ENCODE measurements at regions of chr19 and their contacts with region 1.

Region 1: GRCh38 chr19:2391118-2391725 is 31.2 kb downstream of the TMPRSS9 start:
- DNase-seq: peak; percentile 21
- ATAC-seq: peak; percentile 50
- H3K4me3 ChIP-seq: no peak overlapping the region
- H3K27ac ChIP-seq: no peak overlapping the region
- H3K4me1 ChIP-seq: peaks cover 9% of the 10 kb centered on the region
- H3K27me3 ChIP-seq: no peaks in the 10 kb centered on the region; a peak in 1 of 4 replicates
- CTCF ChIP-seq: peak; percentile 73 to 82 (median 77)
- EP300 ChIP-seq: no peak
- POLR2A ChIP-seq: no peak
- RAD21 ChIP-seq: peak; percentile 91

Region 2: GRCh38 chr19:2151339-2152229 is 239.6 kb before region 1 on chr19 and contains the start of gene AP3D1:
- CTCF ChIA-PET with region 1: interaction called, 25 read pairs
- POLR2A ChIA-PET with region 1: no interaction called
- RAD21 ChIA-PET with region 1: interaction called, 29 read pairs
- SMC1A ChIA-PET with region 1: interaction called, 5 read pairs
- in situ Hi-C with region 1: no loop called
- intact Hi-C with region 1: loop called (anchors 5 kb)
- DNase-seq: peak; percentile 98
- ATAC-seq: peak; percentile 89
- H3K4me3 ChIP-seq: peak within 1 kb of the TSS; percentile 96
- H3K27ac ChIP-seq: peak within 1 kb of the TSS; percentile 91
- H3K4me1 ChIP-seq: peaks cover 20% of the 10 kb centered on the region
- H3K27me3 ChIP-seq: no peaks in the 10 kb centered on the region
- CTCF ChIP-seq: no peak
- EP300 ChIP-seq: no peak
- POLR2A ChIP-seq: peak; percentile 82
- RAD21 ChIP-seq: no peak
- polyA plus RNA-seq, gene AP3D1: 1.5 to 3.0 TPM

Region 3: GRCh38 chr19:2168619-2169424 is 222.4 kb before region 1 on chr19:
- CTCF ChIA-PET with region 1: no interaction called
- POLR2A ChIA-PET with region 1: interaction called, 7 read pairs
- RAD21 ChIA-PET with region 1: interaction called, 16 read pairs
- SMC1A ChIA-PET with region 1: interaction called, 4 read pairs
- in situ Hi-C with region 1: no loop called
- intact Hi-C with region 1: no loop called
- DNase-seq: peak; percentile 92
- ATAC-seq: peak; percentile 70
- H3K4me3 ChIP-seq: peak overlapping the region; percentile 92; the same call in 1 of the 2 replicates
- H3K27ac ChIP-seq: peak overlapping the region; percentile 74
- H3K4me1 ChIP-seq: peaks cover 49% of the 10 kb centered on the region
- H3K27me3 ChIP-seq: no peaks in the 10 kb centered on the region
- CTCF ChIP-seq: 0 out of 6 replicates have a peak, but pooled peaks of 1 of the 3 experiments have one; percentile 14
- EP300 ChIP-seq: peak; percentile 52 to 75; a peak in 2 of 4 replicates
- POLR2A ChIP-seq: peak; percentile 59; the same call in 1 of the 2 replicates
- RAD21 ChIP-seq: no peak

Region 4: GRCh38 chr19:2246801-2247361 is 144.3 kb before region 1 on chr19:
- CTCF ChIA-PET with region 1: no interaction called
- POLR2A ChIA-PET with region 1: no interaction called
- RAD21 ChIA-PET with region 1: no interaction called
- SMC1A ChIA-PET with region 1: no interaction called
- in situ Hi-C with region 1: no loop called
- intact Hi-C with region 1: no loop called
- DNase-seq: no peak
- ATAC-seq: no peak
- H3K4me3 ChIP-seq: no peak overlapping the region
- H3K27ac ChIP-seq: no peak overlapping the region
- H3K4me1 ChIP-seq: no peaks in the 10 kb centered on the region
- H3K27me3 ChIP-seq: peaks cover 0 to 3% of the 10 kb centered on the region in 2 experiments; a peak in 2 of 4 replicates
- CTCF ChIP-seq: no peak
- EP300 ChIP-seq: no peak
- POLR2A ChIP-seq: peak; percentile 56
- RAD21 ChIP-seq: no peak

Region 5: GRCh38 chr19:2269244-2269947 is 121.8 kb before region 1 on chr19:
- CTCF ChIA-PET with region 1: interaction called, 40 read pairs
- POLR2A ChIA-PET with region 1: interaction called, 4 read pairs
- RAD21 ChIA-PET with region 1: interaction called, 4 read pairs
- SMC1A ChIA-PET with region 1: interaction called, 10 read pairs
- in situ Hi-C with region 1: no loop called
- intact Hi-C with region 1: no loop called
- DNase-seq: peak; percentile 66
- ATAC-seq: peak; percentile 61
- H3K4me3 ChIP-seq: peak overlapping the region; percentile 95
- H3K27ac ChIP-seq: peak overlapping the region; percentile 89
- H3K4me1 ChIP-seq: peaks cover 20% of the 10 kb centered on the region
- H3K27me3 ChIP-seq: no peaks in the 10 kb centered on the region
- CTCF ChIP-seq: peak; percentile 5 to 9 (median 9); a peak in 1 of 6 replicates
- EP300 ChIP-seq: no peak
- POLR2A ChIP-seq: peak; percentile 100
- RAD21 ChIP-seq: no peak

Region 6: DNA sequence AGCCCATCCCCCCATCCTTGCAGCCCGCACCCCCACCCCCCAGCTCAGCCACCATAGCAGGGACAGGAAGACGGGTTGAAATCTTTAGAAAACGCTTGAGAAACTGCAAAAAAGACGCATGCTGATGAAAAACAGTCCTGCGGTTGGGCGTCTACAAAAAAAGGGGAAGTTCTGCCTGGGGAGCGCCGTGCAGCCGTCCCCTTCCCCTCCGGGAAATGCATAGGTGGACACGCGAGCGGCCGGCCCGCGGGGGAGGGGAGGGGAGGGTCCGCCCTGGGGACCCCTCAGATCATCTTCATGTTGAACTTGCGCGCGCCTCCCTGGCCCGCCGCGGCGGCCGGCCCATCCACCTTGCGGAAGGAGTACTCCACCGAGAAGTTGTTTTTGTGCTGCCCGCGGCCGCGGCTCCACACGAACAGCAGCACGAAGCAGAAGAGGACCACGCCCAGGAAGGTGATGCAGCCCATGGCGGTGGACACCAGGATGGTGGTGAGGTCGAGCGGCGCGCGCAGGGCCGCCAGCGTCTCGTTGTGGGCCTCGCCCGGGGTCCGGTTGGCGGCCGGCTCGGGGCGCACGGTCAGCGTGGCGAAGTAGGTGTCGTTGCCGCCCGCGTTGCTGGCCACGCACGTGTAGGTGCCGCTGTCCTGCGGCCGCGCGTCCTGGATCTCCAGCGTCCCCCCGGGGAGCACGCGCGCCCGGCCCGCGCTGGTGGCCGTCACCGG is 101.3 kb before region 1 on chr19:
- CTCF ChIA-PET with region 1: interaction called, 9 read pairs
- POLR2A ChIA-PET with region 1: no interaction called
- RAD21 ChIA-PET with region 1: interaction called, 6 read pairs
- SMC1A ChIA-PET with region 1: interaction called, 10 read pairs
- in situ Hi-C with region 1: no loop called
- intact Hi-C with region 1: no loop called
- DNase-seq: peak; percentile 48
- ATAC-seq: peak; percentile 72
- H3K4me3 ChIP-seq: peak overlapping the region; percentile 65
- H3K27ac ChIP-seq: peak overlapping the region; percentile 74
- H3K4me1 ChIP-seq: peaks cover 30% of the 10 kb centered on the region
- H3K27me3 ChIP-seq: no peaks in the 10 kb centered on the region
- CTCF ChIP-seq: no peak
- EP300 ChIP-seq: peak; percentile 53 to 55; a peak in 2 of 4 replicates
- POLR2A ChIP-seq: no peak; the same call in 1 of the 2 replicates
- RAD21 ChIP-seq: no peak

Region 7: DNA sequence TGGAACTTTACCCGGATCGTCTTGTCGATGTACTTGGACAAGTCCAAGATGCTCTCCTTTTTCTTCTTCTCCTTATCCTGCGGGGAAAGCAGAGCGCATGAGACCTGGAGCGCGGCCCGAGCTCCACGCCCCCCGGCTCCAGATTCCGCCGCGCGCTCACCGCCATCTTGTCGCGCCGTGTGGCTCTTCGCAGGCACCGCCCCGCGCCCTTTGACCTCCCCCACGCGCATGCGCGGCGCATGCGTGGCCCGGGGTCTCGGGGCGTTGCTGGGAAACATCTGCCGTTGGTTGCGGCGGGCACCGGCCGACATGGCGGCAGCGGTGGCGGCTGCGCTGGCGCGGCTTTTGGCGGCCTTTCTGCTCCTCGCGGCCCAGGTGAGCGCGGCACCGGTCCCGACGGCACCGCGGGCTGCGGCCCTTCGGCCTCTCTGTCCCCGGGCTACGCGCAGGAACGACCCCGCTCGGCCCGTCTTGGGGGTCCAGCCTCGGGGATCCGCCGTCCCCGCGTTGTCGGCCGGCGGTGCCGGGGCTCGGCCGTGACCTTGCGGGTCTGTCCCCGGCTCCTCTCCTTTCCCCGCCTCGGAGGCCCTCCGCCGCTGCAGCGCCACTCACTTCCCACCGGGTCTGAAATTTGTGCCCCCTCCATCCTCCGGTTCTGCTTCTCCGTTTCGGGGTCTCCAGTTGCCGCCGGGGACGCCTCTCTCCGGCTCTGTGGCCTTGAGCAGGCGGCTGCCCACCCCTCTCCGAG is 62.6 kb before region 1 on chr19 and contains the starts of genes LSM7 and SPPL2B:
- CTCF ChIA-PET with region 1: interaction called, 5 read pairs
- POLR2A ChIA-PET with region 1: interaction called, 6 read pairs
- RAD21 ChIA-PET with region 1: interaction called, 9 read pairs
- SMC1A ChIA-PET with region 1: interaction called, 7 read pairs
- in situ Hi-C with region 1: no loop called
- intact Hi-C with region 1: loop called (anchors 5 kb)
- DNase-seq: peak; percentile 64
- ATAC-seq: peak; percentile 66
- H3K4me3 ChIP-seq: peak within 1 kb of the TSS; percentile 90
- H3K27ac ChIP-seq: peak within 1 kb of the TSS; percentile 76
- H3K4me1 ChIP-seq: peaks cover 35% of the 10 kb centered on the region
- H3K27me3 ChIP-seq: no peaks in the 10 kb centered on the region
- CTCF ChIP-seq: no peak
- EP300 ChIP-seq: no peak
- POLR2A ChIP-seq: peak; percentile 90
- RAD21 ChIP-seq: no peak
- polyA plus RNA-seq, gene LSM7: 24.4 to 108 TPM
- polyA plus RNA-seq, gene SPPL2B: 0.29 to 0.40 TPM

Region 8: GRCh38 chr19:2443066-2443787 is 52.0 kb after region 1 on chr19:
- CTCF ChIA-PET with region 1: no interaction called
- POLR2A ChIA-PET with region 1: no interaction called
- RAD21 ChIA-PET with region 1: no interaction called
- SMC1A ChIA-PET with region 1: no interaction called
- in situ Hi-C with region 1: no loop called
- intact Hi-C with region 1: no loop called
- DNase-seq: no peak
- ATAC-seq: no peak
- H3K4me3 ChIP-seq: no peak overlapping the region
- H3K27ac ChIP-seq: no peak overlapping the region
- H3K4me1 ChIP-seq: peaks cover 11% of the 10 kb centered on the region; the same call in 1 of the 2 replicates
- H3K27me3 ChIP-seq: no peaks in the 10 kb centered on the region
- CTCF ChIP-seq: no peak
- EP300 ChIP-seq: no peak
- POLR2A ChIP-seq: no peak
- RAD21 ChIP-seq: no peak

Region 9: DNA sequence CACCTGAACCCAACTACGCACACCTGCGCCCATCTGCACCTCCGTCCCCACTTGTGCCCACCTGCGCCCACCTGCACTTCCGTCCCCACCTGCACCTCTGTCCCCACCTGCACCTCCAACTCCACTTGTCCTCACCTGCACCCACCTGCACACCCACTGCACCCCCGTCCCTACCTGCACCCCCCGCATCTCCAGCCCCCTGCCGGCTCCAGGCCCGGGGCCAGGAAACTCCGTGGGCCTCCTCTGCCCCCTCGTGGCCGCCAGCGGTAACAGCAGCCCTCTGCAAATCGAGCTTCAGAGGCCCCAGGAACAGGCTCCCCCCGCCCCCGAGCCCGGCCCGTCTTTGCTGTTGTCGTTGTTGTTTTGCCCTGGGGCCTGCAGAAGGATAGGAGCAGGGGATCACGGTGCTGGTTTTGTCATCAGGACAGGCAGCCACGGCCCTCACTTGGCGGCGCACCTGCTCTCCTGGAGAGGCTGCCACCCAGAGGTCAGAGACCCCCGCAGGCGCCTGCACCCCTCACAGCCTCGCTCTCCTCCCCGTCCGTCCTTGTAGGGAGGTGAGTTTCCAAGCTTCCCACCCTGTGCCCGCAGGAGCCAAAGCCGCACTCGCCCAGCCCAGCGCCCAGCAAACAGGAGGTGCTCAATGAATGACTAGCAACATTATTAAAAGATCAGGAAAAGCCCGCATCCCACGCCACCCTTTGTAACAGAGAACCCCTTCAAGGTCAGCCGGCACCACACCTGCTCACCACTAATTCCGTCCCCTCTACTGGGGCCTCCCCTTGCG is 245.9 kb after region 1 on chr19:
- CTCF ChIA-PET with region 1: interaction called, 24 read pairs
- POLR2A ChIA-PET with region 1: interaction called, 6 read pairs
- RAD21 ChIA-PET with region 1: interaction called, 5 read pairs
- SMC1A ChIA-PET with region 1: interaction called, 4 read pairs
- in situ Hi-C with region 1: no loop called
- intact Hi-C with region 1: no loop called
- DNase-seq: no peak
- ATAC-seq: peak; percentile 83
- H3K4me3 ChIP-seq: no peak overlapping the region
- H3K27ac ChIP-seq: no peak overlapping the region
- H3K4me1 ChIP-seq: peaks cover 26% of the 10 kb centered on the region
- H3K27me3 ChIP-seq: no peaks in the 10 kb centered on the region
- CTCF ChIP-seq: peak; percentile 82 to 97 (median 88)
- EP300 ChIP-seq: no peak
- POLR2A ChIP-seq: no peak; the same call in 1 of the 2 replicates
- RAD21 ChIP-seq: peak; percentile 95

Measured in GM12878 (cell line).